ENCODE measurements at regions of chr2 and their contacts with region 1.

Region 1: DNA sequence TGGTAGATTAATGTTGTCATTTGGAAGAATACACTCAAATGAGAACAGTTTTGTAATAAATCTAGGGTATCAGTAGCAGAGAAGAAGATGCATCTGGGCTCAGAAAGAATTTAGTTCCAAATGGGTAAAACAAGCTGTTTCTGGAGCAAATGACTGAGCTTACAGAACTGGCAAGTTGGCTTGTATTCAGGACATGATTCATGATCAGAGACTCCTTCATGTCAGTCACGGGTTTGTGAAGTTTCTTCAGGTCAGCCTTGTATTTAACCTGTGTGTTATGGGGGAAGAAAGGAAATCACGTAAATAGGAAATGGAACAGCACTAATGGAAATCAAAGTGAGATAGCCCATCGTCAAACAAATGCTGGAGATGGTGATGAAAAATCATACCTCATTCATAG is 109.1 kb downstream of the RIF1 start:
- DNase-seq: no peak
- H3K4me3 ChIP-seq: no peak overlapping the region
- H3K27ac ChIP-seq: no peak overlapping the region
- H3K4me1 ChIP-seq: no peaks in the 10 kb centered on the region
- H3K27me3 ChIP-seq: no peaks in the 10 kb centered on the region
- CTCF ChIP-seq: no peak
- POLR2A ChIP-seq: no peak

Region 2: DNA sequence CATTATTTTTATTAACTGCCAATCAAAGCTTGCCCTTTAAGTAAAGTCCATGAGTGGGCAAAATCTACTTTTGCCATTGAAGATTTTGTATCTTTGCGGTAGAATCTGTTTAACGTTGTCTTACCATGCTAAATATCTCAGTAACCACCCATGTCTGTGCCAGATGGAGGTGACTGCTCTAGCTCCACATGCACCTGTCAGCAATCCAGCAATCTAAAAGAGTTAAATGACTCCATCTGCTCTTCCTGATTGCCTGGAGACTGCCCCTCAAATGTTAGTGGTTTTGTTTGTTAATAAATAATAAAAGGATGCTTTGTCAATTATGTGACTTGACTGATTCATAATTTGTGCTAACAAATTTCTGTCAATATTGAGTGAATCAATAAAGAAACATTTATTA is 398.8 kb before region 1 on chr2:
- intact Hi-C with region 1: no loop called
- DNase-seq: no peak
- H3K4me3 ChIP-seq: no peak overlapping the region
- H3K27ac ChIP-seq: no peak overlapping the region
- H3K4me1 ChIP-seq: no peaks in the 10 kb centered on the region
- H3K27me3 ChIP-seq: no peaks in the 10 kb centered on the region
- CTCF ChIP-seq: no peak
- POLR2A ChIP-seq: no peak

Region 3: DNA sequence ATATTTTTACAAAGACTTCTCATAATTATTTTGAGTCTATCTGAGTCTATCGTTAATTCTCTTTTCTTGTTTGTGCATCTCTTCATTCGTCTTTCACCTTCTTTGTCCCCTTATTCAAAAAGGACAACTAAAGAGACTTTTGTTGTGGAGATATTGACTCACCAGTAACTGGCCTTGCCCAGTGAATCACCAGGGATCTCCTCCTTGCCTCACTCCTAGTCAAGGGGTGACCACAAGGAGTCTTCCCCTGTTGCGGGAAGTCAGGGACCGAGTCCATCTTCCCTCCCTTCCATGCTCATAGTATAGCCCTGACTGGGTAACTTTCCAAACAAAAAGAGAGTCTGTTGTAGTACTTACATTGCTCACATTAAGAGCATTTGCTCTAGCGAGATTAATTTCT is 56.5 kb after region 1 on chr2:
- intact Hi-C with region 1: no loop called
- DNase-seq: no peak
- H3K4me3 ChIP-seq: no peak overlapping the region
- H3K27ac ChIP-seq: no peak overlapping the region
- H3K4me1 ChIP-seq: no peaks in the 10 kb centered on the region
- H3K27me3 ChIP-seq: no peaks in the 10 kb centered on the region
- CTCF ChIP-seq: no peak
- POLR2A ChIP-seq: no peak

Region 4: GRCh38 chr2:153461453-153461852 is 1942.7 kb after region 1 on chr2:
- intact Hi-C with region 1: loop called (anchors 5 kb)
- DNase-seq: no peak
- H3K4me3 ChIP-seq: no peak overlapping the region
- H3K27ac ChIP-seq: no peak overlapping the region
- H3K4me1 ChIP-seq: no peaks in the 10 kb centered on the region
- H3K27me3 ChIP-seq: no peaks in the 10 kb centered on the region
- CTCF ChIP-seq: no peak
- POLR2A ChIP-seq: no peak